Prostate gland (tissue), 2 donors: ENCODE measurements at regions of chr15 and their contacts with region 1.

Region 1: DNA sequence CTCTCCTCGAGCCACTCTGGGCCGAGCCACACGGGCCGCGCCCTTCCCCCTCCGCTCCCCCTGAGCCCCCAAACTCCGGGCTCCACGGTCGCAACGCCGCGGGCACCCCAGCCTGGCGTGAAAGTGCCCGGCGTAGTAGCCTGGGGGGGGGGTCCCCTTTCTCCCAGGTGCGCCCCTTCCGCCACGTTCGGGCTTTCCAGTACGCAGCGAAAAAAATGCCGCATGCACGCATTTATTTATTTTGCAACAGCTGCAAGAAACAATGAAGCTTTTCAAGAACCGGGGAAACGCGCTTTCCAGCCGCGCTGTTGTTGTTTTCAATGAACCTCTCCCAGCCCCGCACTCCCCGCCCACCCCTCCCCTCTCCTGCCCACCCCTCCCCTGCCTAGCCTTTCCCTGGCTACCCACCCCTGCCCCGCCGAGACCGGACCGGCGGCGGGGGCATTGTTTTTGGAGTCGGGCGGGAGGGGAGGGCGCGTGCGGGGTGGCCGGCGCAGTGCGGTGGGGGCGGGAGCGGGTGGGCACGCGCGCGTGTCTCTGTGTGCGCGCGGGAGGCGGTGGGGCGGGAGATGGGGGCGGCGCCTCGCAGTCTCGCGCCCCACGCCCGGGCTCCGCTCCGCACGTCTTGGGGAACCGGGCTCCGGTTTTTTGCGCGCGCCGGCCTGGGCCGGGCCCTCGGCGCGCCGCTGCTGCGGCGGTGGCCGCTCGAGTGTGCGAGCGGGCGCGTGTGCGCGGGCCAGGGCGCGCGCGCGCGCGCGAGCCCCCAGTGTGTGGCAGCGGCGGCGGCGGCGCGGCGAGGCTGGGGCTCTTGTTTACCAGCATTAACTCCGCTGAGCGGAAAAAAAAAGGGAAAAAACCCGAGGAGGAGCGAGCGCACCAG is at the start of gene IGF1R:
- DNase-seq: peak; percentile 88
- H3K4me3 ChIP-seq: peak within 1 kb of the TSS; percentile 93 to 98
- H3K27ac ChIP-seq: peak within 1 kb of the TSS; percentile 94 to 97
- H3K4me1 ChIP-seq: no peaks in the 10 kb centered on the region
- H3K27me3 ChIP-seq: no peaks in the 10 kb centered on the region
- CTCF ChIP-seq: peak in 1 of 4 experiments; percentile 19
- POLR2A ChIP-seq: peak; percentile 49
- total RNA-seq, gene IGF1R: 190 to 216 TPM

Region 2: GRCh38 chr15:98442379-98442833 is 205.6 kb before region 1 on chr15:
- intact Hi-C with region 1: loop called (anchors 10 kb)
- DNase-seq: peak; percentile 74
- H3K4me3 ChIP-seq: no peak overlapping the region
- H3K27ac ChIP-seq: peak overlapping the region in 1 of 2 donors; percentile 41
- H3K4me1 ChIP-seq: peaks cover 6% of the 10 kb centered on the region
- H3K27me3 ChIP-seq: no peaks in the 10 kb centered on the region
- CTCF ChIP-seq: peak in 3 of 4 experiments; percentile 75 to 90 (median 76)
- POLR2A ChIP-seq: no peak

Region 3: DNA sequence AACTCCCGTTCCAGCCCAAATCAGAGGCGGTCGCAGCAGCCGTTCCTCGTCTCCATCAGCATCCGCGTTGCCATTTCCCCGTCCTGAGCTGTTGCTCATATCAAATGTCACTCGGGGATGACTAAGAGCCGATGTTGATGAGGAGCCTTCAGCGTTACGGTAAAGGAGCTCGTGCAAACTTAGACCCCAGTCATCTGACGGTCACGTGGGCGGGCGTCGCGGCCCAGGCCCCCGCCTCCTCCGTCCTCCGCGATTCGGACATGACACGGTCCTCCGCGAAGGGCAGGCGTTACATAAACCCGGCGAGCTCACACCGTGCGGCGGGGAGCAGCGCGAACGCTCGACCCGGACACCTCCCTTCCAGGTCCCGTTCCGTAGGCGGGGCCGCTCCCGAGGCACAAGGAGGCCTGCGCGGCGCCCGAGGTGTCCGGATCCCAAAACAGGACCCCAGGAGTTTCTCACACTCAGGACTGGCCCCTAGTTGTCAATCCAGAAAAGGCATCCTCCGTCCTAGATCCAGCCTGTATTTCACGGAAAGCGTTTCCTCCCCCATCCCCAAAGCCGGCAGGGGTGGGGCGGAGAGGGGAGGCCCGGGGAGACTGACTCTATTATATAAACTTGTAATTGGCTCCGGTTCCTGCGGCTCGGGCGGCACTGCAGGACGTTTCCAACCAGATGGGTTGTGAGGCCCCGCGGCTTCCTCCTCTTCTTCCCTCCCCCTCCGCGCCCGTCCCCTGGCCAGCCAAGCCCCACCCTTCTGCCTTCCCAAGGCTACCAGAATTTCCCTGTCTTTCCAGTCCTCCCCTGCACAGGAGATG is 99.7 kb before region 1 on chr15:
- intact Hi-C with region 1: loop called (anchors 5 kb)
- DNase-seq: peak; percentile 66
- H3K4me3 ChIP-seq: peak overlapping the region; percentile 39 to 45
- H3K27ac ChIP-seq: peak overlapping the region; percentile 72 to 74
- H3K4me1 ChIP-seq: no peaks in the 10 kb centered on the region
- H3K27me3 ChIP-seq: no peaks in the 10 kb centered on the region
- CTCF ChIP-seq: peak in 2 of 4 experiments; percentile 10 to 34
- POLR2A ChIP-seq: peak; percentile 49

Region 4: DNA sequence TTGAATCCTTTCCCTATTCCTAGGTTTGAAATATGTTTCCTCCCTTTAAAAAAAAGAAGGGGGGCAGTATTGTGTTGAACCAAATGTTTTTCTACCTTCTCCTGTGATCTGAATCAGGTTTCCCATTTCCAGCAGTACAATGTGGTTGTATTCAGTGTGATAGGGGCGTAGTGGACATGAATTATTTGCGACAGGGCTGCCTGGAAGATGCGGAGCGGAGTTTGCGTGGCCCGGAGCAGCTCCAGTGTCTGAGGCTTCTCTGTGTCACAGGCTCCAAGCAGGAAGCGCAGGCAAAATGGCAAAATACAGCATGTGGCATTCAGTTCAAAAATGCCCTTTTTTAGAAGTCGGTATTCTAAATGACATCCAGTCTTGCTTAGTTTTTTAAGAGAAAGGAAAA is 205.1 kb after region 1 on chr15:
- intact Hi-C with region 1: loop called (anchors 1 kb)
- DNase-seq: peak; percentile 89
- H3K4me3 ChIP-seq: peak overlapping the region; percentile 41 to 49
- H3K27ac ChIP-seq: peak overlapping the region; percentile 91
- H3K4me1 ChIP-seq: peaks cover 39% of the 10 kb centered on the region
- H3K27me3 ChIP-seq: no peaks in the 10 kb centered on the region
- CTCF ChIP-seq: no peak
- POLR2A ChIP-seq: peak; percentile 52

Region 5: GRCh38 chr15:99076552-99077308 is 428.7 kb after region 1 on chr15:
- intact Hi-C with region 1: loop called (anchors 5 kb)
- DNase-seq: peak; percentile 67
- H3K4me3 ChIP-seq: peak overlapping the region; percentile 7 to 18
- H3K27ac ChIP-seq: peak overlapping the region in 1 of 2 donors; percentile 27
- H3K4me1 ChIP-seq: no peaks in the 10 kb centered on the region
- H3K27me3 ChIP-seq: no peaks in the 10 kb centered on the region
- CTCF ChIP-seq: peak in 3 of 4 experiments; percentile 83 to 95 (median 90)
- POLR2A ChIP-seq: no peak